MCF 10A (cell line): ENCODE measurements at regions of chr21 and their contacts with region 1.

Region 1: DNA sequence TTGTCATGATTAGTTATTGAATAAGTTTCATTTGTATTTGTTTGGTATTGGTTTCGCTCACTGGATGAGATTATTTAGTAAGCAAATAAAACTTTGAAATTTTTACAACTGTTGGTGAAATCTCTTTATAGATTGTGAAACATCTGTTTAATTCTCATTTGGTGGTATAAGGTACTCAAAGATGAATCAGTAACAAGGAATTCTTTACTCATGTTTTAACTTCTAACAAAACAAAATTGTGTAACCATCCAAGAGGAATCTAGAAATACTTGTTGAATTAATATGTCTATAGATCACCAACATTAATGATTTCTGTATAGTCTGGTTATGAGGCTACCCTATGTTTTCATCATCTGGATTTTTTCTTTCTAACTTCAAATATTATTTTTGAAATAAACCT is 62.8 kb upstream of the USP25 start:
- DNase-seq: peak; percentile 66
- H3K4me3 Mint-ChIP-seq: no peak overlapping the region
- H3K27ac Mint-ChIP-seq: peak overlapping the region; percentile 23
- H3K4me1 Mint-ChIP-seq: peaks cover 16% of the 10 kb centered on the region
- H3K27me3 Mint-ChIP-seq: no peaks in the 10 kb centered on the region
- CTCF ChIP-seq: no peak

Region 2: DNA sequence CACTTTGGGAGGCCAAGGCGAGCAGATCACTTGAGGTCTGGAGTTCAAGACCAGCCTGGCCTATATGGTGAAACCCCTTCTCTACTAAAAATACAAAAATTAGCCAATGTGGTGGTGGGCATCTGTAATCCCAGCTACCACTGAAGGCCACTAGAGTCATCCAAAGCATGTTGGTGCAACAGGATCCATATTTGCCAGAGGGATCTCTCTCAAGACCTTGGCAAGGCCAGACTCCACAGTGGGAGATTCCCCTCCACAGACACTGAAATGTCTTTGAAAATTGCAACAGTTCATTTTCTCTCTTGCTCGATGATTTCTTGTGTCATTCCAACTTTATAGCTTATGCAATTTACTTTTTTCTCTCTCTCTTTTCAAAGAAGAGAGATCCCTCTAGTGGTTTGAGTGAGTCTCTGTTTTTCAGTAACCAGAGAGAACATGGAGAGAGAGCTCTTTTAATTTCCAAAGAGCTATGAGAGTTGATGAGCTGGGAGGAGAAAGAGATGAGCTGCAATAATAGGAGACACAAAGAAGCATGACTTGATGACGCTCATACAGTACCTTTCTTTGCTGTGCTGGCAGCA is 114.0 kb before region 1 on chr21:
- CTCF ChIA-PET with region 1: no interaction called
- POLR2A ChIA-PET with region 1: no interaction called
- intact Hi-C with region 1: no loop called
- DNase-seq: peak; percentile 41
- H3K4me3 Mint-ChIP-seq: no peak overlapping the region
- H3K27ac Mint-ChIP-seq: no peak overlapping the region
- H3K4me1 Mint-ChIP-seq: no peaks in the 10 kb centered on the region
- H3K27me3 Mint-ChIP-seq: no peaks in the 10 kb centered on the region
- CTCF ChIP-seq: peak; percentile 40

Region 3: GRCh38 chr21:15638856-15639549 is 28.0 kb before region 1 on chr21:
- CTCF ChIA-PET with region 1: interaction called, 3 read pairs
- POLR2A ChIA-PET with region 1: interaction called, 14 read pairs
- intact Hi-C with region 1: no loop called
- DNase-seq: peak; percentile 77
- H3K4me3 Mint-ChIP-seq: peak overlapping the region; percentile 44
- H3K27ac Mint-ChIP-seq: peak overlapping the region; percentile 84
- H3K4me1 Mint-ChIP-seq: peaks cover 25% of the 10 kb centered on the region
- H3K27me3 Mint-ChIP-seq: no peaks in the 10 kb centered on the region
- CTCF ChIP-seq: no peak